ENCODE measurements at regions of chr4 and their contacts with region 1.

Region 1: DNA sequence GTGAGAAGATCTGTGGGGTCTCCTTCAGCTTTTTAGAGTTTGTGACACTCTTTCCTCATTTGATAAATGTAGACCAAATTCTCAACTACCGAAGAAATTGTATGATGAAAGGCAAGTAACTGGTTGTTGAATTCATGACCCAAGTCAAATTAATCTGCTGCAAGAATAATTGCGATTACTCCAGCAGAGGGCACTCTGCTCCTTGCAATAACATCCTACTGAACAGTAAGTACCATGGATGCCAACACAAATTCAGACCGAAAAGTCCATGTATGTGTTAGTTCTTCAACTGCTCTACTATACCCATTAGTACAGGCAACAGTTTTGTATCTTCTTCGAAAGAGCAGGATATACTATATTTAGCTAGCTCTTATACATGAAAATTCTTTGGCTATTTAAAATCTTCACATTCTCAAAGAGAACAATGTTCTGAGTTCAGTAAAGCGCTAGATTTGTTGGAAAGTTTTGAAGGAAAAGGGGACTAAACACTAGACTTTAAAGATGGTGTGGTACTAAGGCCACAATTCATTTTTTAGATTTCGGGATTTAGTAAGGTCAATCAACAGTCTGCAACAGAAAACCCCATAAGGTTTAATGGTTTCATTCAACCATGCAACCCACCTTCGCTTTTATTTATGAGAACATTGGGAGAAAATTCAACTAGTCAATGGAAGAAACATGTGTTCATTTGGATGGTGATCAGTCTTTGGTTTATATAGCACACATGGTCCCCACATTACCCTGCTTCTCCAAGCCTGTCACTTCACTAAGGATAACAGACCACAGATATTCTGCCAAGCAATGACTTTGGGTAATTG is 105.4 kb upstream of the TBC1D9 start:
- H3K4me3 Mint-ChIP-seq: no peak overlapping the region
- H3K27ac Mint-ChIP-seq: no peak overlapping the region
- H3K4me1 Mint-ChIP-seq: peaks cover 17% of the 10 kb centered on the region
- H3K27me3 Mint-ChIP-seq: peaks cover 1% of the 10 kb centered on the region

Region 2: GRCh38 chr4:140884431-140885058 is 23.0 kb after region 1 on chr4:
- intact Hi-C with region 1: loop called (anchors 1 kb)
- H3K4me3 Mint-ChIP-seq: no peak overlapping the region
- H3K27ac Mint-ChIP-seq: no peak overlapping the region
- H3K4me1 Mint-ChIP-seq: no peaks in the 10 kb centered on the region
- H3K27me3 Mint-ChIP-seq: no peaks in the 10 kb centered on the region

Region 3: GRCh38 chr4:141133146-141133998 is 271.8 kb after region 1 on chr4 and contains the start of gene RNF150:
- intact Hi-C with region 1: loop called (anchors 2 kb)
- H3K4me3 Mint-ChIP-seq: peak within 1 kb of the TSS; percentile 82
- H3K27ac Mint-ChIP-seq: no peak within 1 kb of the TSS
- H3K4me1 Mint-ChIP-seq: peaks cover 17% of the 10 kb centered on the region
- H3K27me3 Mint-ChIP-seq: peaks cover 72% of the 10 kb centered on the region